ENCODE measurements at regions of chr16 and their contacts with region 1.

Region 1: GRCh38 chr16:11105038-11105903 is 150.7 kb downstream of the SOCS1 start:
- DNase-seq: peak; percentile 65
- ATAC-seq: peak; percentile 57
- H3K4me3 Mint-ChIP-seq: no peak overlapping the region
- H3K27ac Mint-ChIP-seq: peak overlapping the region; percentile 84
- H3K4me1 Mint-ChIP-seq: peaks cover 80% of the 10 kb centered on the region
- H3K27me3 Mint-ChIP-seq: no peaks in the 10 kb centered on the region

Region 2: DNA sequence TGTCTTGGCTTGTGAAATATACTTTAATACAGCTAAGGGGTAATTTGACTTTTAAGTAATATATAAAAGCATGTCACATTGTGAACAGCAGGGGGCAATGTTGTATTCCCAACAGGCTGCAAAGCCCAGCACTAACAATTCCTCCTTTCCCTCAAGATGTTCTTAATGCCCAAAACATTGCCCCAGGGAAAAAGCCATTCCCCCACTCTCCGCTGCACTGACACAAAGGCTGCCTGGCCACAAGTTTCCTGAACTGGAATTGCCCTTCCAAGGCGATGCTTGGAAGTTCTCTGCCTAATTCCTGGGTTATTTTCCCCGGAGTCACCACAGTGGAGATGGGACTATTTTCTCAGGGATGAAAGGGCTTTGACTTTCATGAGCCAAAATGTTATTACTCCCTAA is 133.7 kb before region 1 on chr16:
- CTCF ChIA-PET with region 1: interaction called, 20 read pairs
- DNase-seq: no peak
- ATAC-seq: no peak
- H3K4me3 Mint-ChIP-seq: no peak overlapping the region
- H3K27ac Mint-ChIP-seq: peak overlapping the region; percentile 86
- H3K4me1 Mint-ChIP-seq: peaks cover 73% of the 10 kb centered on the region
- H3K27me3 Mint-ChIP-seq: no peaks in the 10 kb centered on the region

Region 3: DNA sequence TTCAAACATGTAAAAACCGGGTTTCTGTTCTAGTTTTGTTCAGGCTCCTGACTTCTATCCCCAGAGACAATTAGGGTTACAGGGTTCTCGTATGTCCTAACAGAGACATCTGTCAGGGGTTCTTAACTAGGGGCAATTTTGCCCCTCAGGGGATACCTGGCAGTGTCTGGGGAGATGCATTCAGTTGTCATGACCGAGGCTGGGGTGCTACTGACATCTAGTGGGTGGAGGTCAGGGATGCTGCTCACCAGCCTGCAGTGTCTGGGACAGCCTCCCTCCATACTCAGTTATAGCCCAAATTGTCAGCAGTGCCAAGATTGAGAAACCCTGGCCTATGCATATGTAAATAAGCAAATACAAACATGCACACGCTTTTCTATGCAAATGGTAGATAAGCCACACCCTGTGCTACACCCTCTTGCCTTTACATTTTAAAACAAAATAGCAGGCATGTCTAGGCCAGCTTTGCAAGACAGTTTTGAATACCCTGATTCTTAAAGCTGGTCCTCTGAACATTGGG is 123.5 kb before region 1 on chr16:
- CTCF ChIA-PET with region 1: interaction called, 11 read pairs
- DNase-seq: peak; percentile 87
- ATAC-seq: peak; percentile 89
- H3K4me3 Mint-ChIP-seq: peak overlapping the region; percentile 58
- H3K27ac Mint-ChIP-seq: peak overlapping the region; percentile 81
- H3K4me1 Mint-ChIP-seq: peaks cover 85% of the 10 kb centered on the region
- H3K27me3 Mint-ChIP-seq: no peaks in the 10 kb centered on the region

Region 4: DNA sequence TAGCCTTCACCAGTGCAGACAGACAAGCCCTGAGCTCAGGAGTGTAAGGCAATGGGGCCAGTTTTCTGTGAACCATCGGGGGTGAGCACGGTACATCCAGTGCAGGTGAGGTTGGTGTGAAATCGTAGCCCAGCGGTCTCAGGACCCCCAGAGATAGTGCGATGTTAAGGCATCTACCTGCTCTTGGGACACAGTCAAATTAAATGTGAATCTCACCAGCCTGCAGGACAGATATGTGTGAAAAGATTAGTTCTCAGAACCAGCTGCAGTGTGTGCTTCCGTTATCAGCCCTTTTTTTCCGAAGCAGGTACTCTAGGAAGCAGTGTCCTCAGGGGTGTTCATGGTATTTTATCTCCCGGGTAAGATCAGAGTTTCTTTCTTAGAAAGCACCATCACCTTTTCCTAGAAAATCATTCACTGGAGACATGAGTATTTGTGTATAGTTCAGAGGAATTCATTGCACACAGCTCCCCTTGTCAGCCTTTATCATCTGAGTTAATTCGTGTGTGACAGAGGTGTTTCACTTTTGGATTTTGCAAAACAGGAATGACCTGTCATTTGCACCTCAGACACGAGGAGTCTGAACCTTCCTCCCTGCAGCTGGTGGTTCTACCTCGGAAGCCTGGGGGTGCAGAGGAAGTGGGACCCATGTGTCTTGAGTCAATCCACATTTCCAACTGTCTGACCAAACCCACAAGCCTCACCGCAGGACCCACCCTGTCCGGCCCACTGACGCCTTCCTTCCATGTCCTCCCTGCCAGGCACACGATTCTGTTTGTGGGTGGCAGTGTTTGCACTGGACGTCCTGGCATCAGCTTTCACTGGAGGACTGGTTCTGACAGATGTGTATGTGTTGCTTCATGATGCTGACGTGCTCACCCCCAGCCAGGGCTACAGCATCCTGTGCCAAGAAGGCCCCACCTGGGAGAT is 53.1 kb before region 1 on chr16:
- CTCF ChIA-PET with region 1: interaction called, 14 read pairs
- DNase-seq: peak; percentile 97
- ATAC-seq: peak; percentile 79
- H3K4me3 Mint-ChIP-seq: peak overlapping the region; percentile 58
- H3K27ac Mint-ChIP-seq: peak overlapping the region; percentile 92
- H3K4me1 Mint-ChIP-seq: peaks cover 97% of the 10 kb centered on the region
- H3K27me3 Mint-ChIP-seq: no peaks in the 10 kb centered on the region

Region 5: GRCh38 chr16:11088074-11088730 is 17.1 kb before region 1 on chr16:
- CTCF ChIA-PET with region 1: interaction called, 17 read pairs
- DNase-seq: peak; percentile 67
- ATAC-seq: peak; percentile 57
- H3K4me3 Mint-ChIP-seq: no peak overlapping the region
- H3K27ac Mint-ChIP-seq: peak overlapping the region; percentile 81
- H3K4me1 Mint-ChIP-seq: peaks cover 72% of the 10 kb centered on the region
- H3K27me3 Mint-ChIP-seq: no peaks in the 10 kb centered on the region

Region 6: DNA sequence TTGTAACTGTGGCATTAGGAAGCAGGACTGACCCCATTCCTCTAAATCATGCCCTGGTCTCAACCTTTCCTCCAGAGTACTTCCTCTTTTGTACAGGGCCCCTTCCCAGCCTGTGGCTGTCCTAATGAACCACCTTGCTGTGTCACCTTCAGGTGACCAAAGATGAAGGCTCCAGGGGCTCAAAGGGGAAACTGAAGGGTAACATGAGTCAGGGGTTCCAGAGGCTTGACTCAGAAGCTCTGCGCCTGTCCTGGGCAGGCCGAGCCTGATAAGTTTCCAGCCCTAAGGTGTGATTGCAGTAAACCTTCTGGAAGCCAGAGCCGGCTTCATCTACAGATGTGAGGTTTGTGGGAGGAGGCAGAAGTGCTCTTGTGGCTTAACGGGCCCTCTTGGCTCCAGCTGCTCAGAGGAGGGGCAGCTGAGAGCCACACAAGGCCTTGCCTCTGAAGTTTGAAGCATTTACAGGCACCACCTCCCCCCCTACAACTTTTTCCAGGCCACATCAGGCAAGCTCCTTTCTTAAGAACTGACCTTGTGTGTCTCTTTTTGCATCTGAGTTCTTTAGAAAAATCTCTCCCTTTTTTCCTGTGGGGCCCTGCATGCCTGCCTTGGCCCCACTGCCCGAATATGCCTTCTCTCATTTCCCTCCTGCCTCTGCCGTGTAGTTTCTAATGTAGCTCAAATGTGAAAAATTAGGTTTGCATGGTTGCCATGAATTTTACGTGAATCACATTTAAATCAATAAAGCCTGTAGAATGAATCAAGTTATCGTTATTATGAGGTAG is 11.0 kb before region 1 on chr16:
- CTCF ChIA-PET with region 1: interaction called, 13 read pairs
- DNase-seq: peak; percentile 88
- ATAC-seq: peak; percentile 85
- H3K4me3 Mint-ChIP-seq: peak overlapping the region; percentile 25
- H3K27ac Mint-ChIP-seq: peak overlapping the region; percentile 93
- H3K4me1 Mint-ChIP-seq: peaks cover 90% of the 10 kb centered on the region
- H3K27me3 Mint-ChIP-seq: no peaks in the 10 kb centered on the region